ENCODE measurements at regions of chr3 and their contacts with region 1.

Region 1: GRCh38 chr3:113912552-113913236 is 35.1 kb upstream of the ZDHHC23 start:
- DNase-seq: peak; percentile 39 to 79
- H3K4me3 ChIP-seq: no peak overlapping the region
- H3K27ac ChIP-seq: peak overlapping the region in 1 of 5 donors; percentile 30
- H3K4me1 ChIP-seq: peaks cover 0 to 9% (median 0%) of the 10 kb centered on the region in 4 donors
- H3K27me3 ChIP-seq: no peaks in the 10 kb centered on the region
- CTCF ChIP-seq: peak in 5 of 7 experiments; percentile 38 to 87 (median 57)
- EP300 ChIP-seq: no peak
- POLR2A ChIP-seq: no peak

Region 2: DNA sequence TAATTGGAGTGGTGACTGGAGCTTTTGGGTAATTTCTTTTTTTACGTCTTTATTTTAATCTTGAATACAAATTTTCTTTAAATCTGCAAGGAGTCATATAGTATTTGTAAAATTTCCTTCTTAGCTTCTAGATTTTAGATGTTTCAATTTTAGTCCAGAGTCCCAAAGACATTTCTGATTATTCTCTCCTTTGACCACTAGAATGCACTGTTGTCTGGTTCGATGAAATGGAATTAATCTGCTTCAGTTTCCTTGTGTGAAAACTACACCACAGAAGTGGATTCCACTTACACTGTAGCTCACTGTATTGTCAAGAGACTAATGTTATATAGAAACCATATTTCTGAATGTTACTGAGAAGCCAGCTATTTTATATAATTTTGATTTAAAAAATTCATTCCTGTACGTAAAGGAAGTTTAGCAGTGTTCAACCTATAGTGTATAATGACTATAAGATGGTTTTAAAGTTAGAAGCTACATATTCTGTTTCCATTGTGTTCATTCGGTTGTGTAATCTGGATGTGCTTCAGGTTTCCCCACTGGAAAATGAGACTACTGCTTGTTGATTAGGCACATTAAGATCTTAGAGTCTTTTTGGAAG is 68.0 kb before region 1 on chr3:
- intact Hi-C with region 1: loop called (anchors 10 kb)
- DNase-seq: peak in 1 of 2 donors; percentile 75
- H3K4me3 ChIP-seq: no peak overlapping the region
- H3K27ac ChIP-seq: no peak overlapping the region
- H3K4me1 ChIP-seq: no peaks in the 10 kb centered on the region
- H3K27me3 ChIP-seq: no peaks in the 10 kb centered on the region
- CTCF ChIP-seq: peak in 3 of 7 experiments; percentile 49 to 58 (median 52)
- EP300 ChIP-seq: no peak
- POLR2A ChIP-seq: no peak

Measured in stomach (tissue), 19 donors.